ENCODE measurements at regions of chr10 and their contacts with region 1.

Region 1: GRCh38 chr10:70221030-70221429 is 12.2 kb downstream of the PPA1 start:
- DNase-seq: no peak
- ATAC-seq: no peak
- H3K4me3 ChIP-seq: no peak overlapping the region
- H3K4me3 Mint-ChIP-seq: peak overlapping the region in 4 of 10 donors; percentile 8 to 74 (median 42)
- H3K27ac ChIP-seq: no peak overlapping the region
- H3K27ac Mint-ChIP-seq: peak overlapping the region in 6 of 9 donors; percentile 9 to 78 (median 31)
- H3K4me1 ChIP-seq: peaks cover 0 to 8% of the 10 kb centered on the region in 2 donors
- H3K4me1 Mint-ChIP-seq: peaks cover 9 to 23% (median 12%) of the 10 kb centered on the region in 7 donors
- H3K27me3 ChIP-seq: no peaks in the 10 kb centered on the region
- H3K27me3 Mint-ChIP-seq: no peaks in the 10 kb centered on the region

Region 2: GRCh38 chr10:70084189-70084588 is 136.8 kb before region 1 on chr10:
- CTCF ChIA-PET with region 1: interaction called, 3 read pairs
- POLR2A ChIA-PET with region 1: no interaction called
- intact Hi-C with region 1: loop called in 1 of 2 experiments (anchors 1 kb)
- DNase-seq: peak in 5 of 9 donors; percentile 5 to 18 (median 9)
- ATAC-seq: no peak
- H3K4me3 ChIP-seq: no peak overlapping the region
- H3K4me3 Mint-ChIP-seq: no peak overlapping the region
- H3K27ac ChIP-seq: no peak overlapping the region
- H3K27ac Mint-ChIP-seq: no peak overlapping the region
- H3K4me1 ChIP-seq: no peaks in the 10 kb centered on the region
- H3K4me1 Mint-ChIP-seq: peaks cover 0 to under 1% (median 0%) of the 10 kb centered on the region in 7 donors
- H3K27me3 ChIP-seq: no peaks in the 10 kb centered on the region
- H3K27me3 Mint-ChIP-seq: peaks cover 0 to 12% (median 0%) of the 10 kb centered on the region in 5 donors

Region 3: DNA sequence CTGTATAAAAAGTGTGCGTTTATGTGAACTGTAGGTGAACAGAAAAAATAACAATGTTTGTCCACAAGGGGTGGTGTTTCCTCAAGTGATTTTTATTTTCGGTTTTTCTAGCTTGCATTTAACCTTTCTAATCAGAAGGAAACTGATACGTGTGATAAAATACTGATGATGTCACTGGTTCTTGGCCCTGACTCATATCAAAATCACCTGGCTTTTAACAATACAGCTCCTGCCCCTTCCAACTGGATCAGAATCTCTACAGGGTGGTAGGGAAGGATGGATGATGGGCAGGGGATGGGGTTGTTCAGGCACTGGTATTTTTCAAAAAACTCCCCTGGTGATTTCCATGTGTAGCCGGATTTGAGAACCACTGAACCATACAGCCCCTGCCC is 51.9 kb after region 1 on chr10:
- CTCF ChIA-PET with region 1: no interaction called
- POLR2A ChIA-PET with region 1: interaction called, 7 read pairs
- intact Hi-C with region 1: loop called in 1 of 2 experiments (anchors 2 kb)
- DNase-seq: peak in 5 of 9 donors; percentile 3 to 42 (median 36)
- ATAC-seq: peak; percentile 77
- H3K4me3 ChIP-seq: no peak overlapping the region
- H3K4me3 Mint-ChIP-seq: peak overlapping the region in 5 of 10 donors; percentile 21 to 47 (median 23)
- H3K27ac ChIP-seq: no peak overlapping the region
- H3K27ac Mint-ChIP-seq: peak overlapping the region in 2 of 9 donors; percentile 30 to 46
- H3K4me1 ChIP-seq: no peaks in the 10 kb centered on the region
- H3K4me1 Mint-ChIP-seq: peaks cover 5 to 22% (median 6%) of the 10 kb centered on the region in 7 donors
- H3K27me3 ChIP-seq: no peaks in the 10 kb centered on the region
- H3K27me3 Mint-ChIP-seq: peaks cover 0 to 4% (median 0%) of the 10 kb centered on the region in 5 donors

Region 4: DNA sequence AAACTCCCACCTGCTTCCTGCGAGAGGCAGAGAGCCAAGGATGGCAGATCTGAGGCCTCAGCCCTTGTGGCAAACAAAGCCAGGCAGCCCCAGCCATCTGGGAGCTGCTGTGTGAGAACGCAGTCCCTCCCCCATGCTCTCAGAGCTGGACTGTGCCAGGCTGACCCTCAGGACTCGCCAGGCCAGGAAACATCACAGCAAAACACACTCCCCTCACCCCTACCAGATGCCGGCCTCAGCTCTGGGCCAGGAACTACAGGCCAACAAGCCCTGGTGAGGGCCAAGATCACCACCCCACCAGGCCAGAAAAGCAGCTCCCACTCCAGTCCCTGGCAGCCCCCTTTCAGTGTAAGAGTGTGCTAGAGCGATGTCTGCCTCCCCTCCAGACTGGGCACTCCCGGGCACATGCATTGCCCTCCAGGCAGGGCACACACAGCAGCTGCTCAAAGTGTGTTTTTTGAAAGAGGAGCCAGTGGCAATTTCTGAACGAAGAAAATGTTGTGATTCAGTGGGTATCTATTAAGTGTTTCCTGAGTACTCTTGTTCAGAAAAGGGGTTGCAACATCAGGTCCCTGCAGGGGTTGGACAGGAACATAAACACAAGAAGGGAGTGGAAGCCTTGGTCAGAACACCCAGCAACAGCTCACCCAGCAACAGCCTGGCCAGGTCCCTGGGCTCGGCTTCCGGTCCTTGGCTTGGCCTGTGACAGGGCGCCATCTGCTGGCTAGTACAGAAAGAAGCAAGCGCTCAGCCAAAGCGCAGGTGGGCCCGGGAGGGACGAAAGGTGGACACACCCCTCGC is 143.1 kb after region 1 on chr10:
- CTCF ChIA-PET with region 1: interaction called, 192 read pairs
- POLR2A ChIA-PET with region 1: interaction called, 10 read pairs
- intact Hi-C with region 1: loop called (anchors 1 kb)
- DNase-seq: peak; percentile 62 to 83 (median 77)
- ATAC-seq: peak; percentile 98
- H3K4me3 ChIP-seq: no peak overlapping the region
- H3K4me3 Mint-ChIP-seq: peak overlapping the region in 5 of 10 donors; percentile 23 to 71 (median 42)
- H3K27ac ChIP-seq: no peak overlapping the region
- H3K27ac Mint-ChIP-seq: peak overlapping the region in 4 of 9 donors; percentile 25 to 50 (median 36)
- H3K4me1 ChIP-seq: peaks cover 0 to 6% of the 10 kb centered on the region in 2 donors
- H3K4me1 Mint-ChIP-seq: peaks cover 7 to 12% (median 9%) of the 10 kb centered on the region in 7 donors
- H3K27me3 ChIP-seq: no peaks in the 10 kb centered on the region
- H3K27me3 Mint-ChIP-seq: peaks cover 0 to 3% (median 0%) of the 10 kb centered on the region in 5 donors

Region 5: GRCh38 chr10:70880077-70880534 is 659.1 kb after region 1 on chr10:
- CTCF ChIA-PET with region 1: no interaction called
- POLR2A ChIA-PET with region 1: no interaction called
- intact Hi-C with region 1: loop called in 1 of 2 experiments (anchors 1 kb)
- DNase-seq: peak; percentile 39 to 79 (median 65)
- ATAC-seq: peak; percentile 90
- H3K4me3 ChIP-seq: no peak overlapping the region
- H3K4me3 Mint-ChIP-seq: no peak overlapping the region
- H3K27ac ChIP-seq: no peak overlapping the region
- H3K27ac Mint-ChIP-seq: no peak overlapping the region
- H3K4me1 ChIP-seq: no peaks in the 10 kb centered on the region
- H3K4me1 Mint-ChIP-seq: peaks cover 0 to 8% (median 3%) of the 10 kb centered on the region in 7 donors
- H3K27me3 ChIP-seq: no peaks in the 10 kb centered on the region
- H3K27me3 Mint-ChIP-seq: no peaks in the 10 kb centered on the region

Measured in naive thymus-derived CD4-positive, alpha-beta T cell (primary cell).